Sigmoid colon (tissue), 7 donors: ENCODE measurements at regions of chr13 and their contacts with region 1.

Region 1: DNA sequence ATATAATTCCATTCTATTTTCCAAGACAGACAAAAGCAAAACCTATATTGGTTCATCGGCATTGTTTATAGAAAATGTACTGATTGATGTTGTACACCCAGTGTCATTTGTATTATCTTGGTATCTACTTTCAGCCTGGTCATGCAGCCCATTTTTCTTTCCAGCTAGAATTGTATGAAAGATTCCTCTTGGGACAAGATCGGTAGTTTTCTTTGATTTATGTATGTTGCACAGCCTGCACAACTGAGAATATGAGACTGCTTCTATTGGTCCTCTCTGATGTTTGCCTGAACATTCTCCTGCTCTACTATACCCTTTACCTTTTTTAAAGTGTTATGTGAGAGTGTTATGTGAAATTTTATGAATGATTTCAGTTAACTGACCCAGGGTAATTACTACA is 487.7 kb upstream of the PRR20A start:
- DNase-seq: no peak
- H3K4me3 ChIP-seq: no peak overlapping the region
- H3K27ac ChIP-seq: no peak overlapping the region
- H3K4me1 ChIP-seq: no peaks in the 10 kb centered on the region
- H3K27me3 ChIP-seq: no peaks in the 10 kb centered on the region
- CTCF ChIP-seq: no peak
- EP300 ChIP-seq: no peak
- POLR2A ChIP-seq: no peak

Region 2: GRCh38 chr13:55464222-55464621 is 1188.8 kb before region 1 on chr13:
- intact Hi-C with region 1: loop called (anchors 10 kb)
- DNase-seq: no peak
- H3K4me3 ChIP-seq: no peak overlapping the region
- H3K27ac ChIP-seq: no peak overlapping the region
- H3K4me1 ChIP-seq: no peaks in the 10 kb centered on the region
- H3K27me3 ChIP-seq: no peaks in the 10 kb centered on the region
- CTCF ChIP-seq: no peak
- EP300 ChIP-seq: no peak
- POLR2A ChIP-seq: no peak